ENCODE measurements at regions of chr6 and their contacts with region 1.

Region 1: DNA sequence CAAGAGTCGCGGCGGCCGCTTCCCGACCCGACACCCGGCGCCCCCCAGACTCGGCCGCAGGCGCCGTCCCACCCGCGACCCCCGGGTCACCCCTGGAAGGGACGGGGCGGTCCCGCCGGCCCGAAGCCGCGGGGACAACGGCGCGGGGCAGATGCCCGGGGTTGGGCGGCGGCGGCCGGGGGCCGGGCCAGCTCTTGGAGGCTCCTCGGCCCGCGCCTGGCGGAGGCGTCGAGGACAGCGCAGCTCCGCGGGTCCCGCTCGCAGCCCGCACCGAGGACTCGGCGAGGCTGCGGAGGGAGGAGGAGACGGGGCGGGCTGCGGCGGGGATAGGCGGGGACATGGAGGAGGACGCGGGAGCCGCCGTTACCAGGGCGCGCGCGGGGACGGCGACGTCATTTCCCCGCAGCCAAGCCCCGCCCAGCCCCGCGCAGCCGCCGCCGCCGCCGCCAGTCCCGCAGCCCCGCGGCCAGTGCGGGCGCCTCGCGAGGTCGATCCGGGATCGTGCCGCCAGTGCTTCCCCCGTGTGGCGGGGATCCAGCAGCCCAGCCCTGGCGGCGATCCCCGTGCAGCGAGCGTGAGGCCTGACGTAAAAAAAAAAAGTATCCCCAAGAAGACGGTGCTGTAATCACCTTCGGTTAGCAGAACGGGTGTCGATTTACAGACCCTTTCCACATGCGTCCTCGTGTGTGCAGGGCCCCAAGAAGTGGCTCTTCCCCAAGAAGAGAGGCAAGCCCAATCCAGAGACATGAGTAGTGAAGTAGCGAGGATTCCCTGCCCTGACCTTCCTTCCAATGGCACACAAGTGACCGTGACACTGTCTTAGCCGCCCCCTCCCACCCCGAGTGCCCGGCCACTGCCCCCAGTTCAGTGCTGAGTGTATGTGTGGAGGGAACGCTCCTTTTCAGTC is at the start of gene FAM184A:
- DNase-seq: peak; percentile 94
- H3K4me3 Mint-ChIP-seq: peak within 1 kb of the TSS; percentile 93
- H3K27ac Mint-ChIP-seq: peak within 1 kb of the TSS; percentile 93
- H3K4me1 Mint-ChIP-seq: peaks cover 37% of the 10 kb centered on the region
- H3K27me3 Mint-ChIP-seq: peaks cover 6% of the 10 kb centered on the region
- total RNA-seq, gene FAM184A: 7.5 and 9.0 TPM in 2 replicates

Region 2: DNA sequence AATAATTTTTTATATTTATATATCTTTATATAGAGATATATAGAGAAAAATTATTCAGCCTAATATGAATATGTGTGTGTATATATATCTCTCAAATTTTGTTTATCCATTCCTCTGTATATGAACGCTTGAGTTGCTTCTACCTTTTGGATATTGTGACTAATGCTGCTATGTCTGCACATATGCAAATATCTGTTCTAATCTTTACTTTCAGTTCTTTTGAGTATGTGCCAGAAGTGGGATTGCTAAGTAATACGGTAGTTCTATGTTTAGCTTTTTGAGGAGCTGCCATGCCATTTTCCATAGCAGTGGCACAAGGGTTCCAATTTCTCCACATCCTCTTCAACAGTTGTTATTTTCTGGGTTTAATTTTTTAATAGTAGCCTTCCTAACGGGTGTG is 354.4 kb before region 1 on chr6:
- intact Hi-C with region 1: loop called (anchors 10 kb)
- DNase-seq: no peak
- H3K4me3 Mint-ChIP-seq: peak overlapping the region; percentile 36
- H3K27ac Mint-ChIP-seq: peak overlapping the region; percentile 59
- H3K4me1 Mint-ChIP-seq: peaks cover 51% of the 10 kb centered on the region
- H3K27me3 Mint-ChIP-seq: no peaks in the 10 kb centered on the region

Region 3: GRCh38 chr6:118934461-118935330 is 143.9 kb before region 1 on chr6 and contains the start of gene MCM9:
- intact Hi-C with region 1: loop called (anchors 1 kb)
- DNase-seq: peak; percentile 97
- H3K4me3 Mint-ChIP-seq: peak within 1 kb of the TSS; percentile 91
- H3K27ac Mint-ChIP-seq: peak within 1 kb of the TSS; percentile 97
- H3K4me1 Mint-ChIP-seq: peaks cover 19% of the 10 kb centered on the region
- H3K27me3 Mint-ChIP-seq: no peaks in the 10 kb centered on the region
- total RNA-seq, gene MCM9: 19.0 and 21.3 TPM in 2 replicates

Region 4: GRCh38 chr6:119052292-119052889 is 26.2 kb before region 1 on chr6:
- intact Hi-C with region 1: loop called (anchors 1 kb)
- DNase-seq: peak; percentile 70
- H3K4me3 Mint-ChIP-seq: no peak overlapping the region
- H3K27ac Mint-ChIP-seq: peak overlapping the region; percentile 5
- H3K4me1 Mint-ChIP-seq: peaks cover 18% of the 10 kb centered on the region
- H3K27me3 Mint-ChIP-seq: no peaks in the 10 kb centered on the region

Region 5: GRCh38 chr6:119066517-119066916 is 12.1 kb before region 1 on chr6:
- intact Hi-C with region 1: no loop called
- DNase-seq: no peak
- H3K4me3 Mint-ChIP-seq: no peak overlapping the region
- H3K27ac Mint-ChIP-seq: no peak overlapping the region
- H3K4me1 Mint-ChIP-seq: no peaks in the 10 kb centered on the region
- H3K27me3 Mint-ChIP-seq: no peaks in the 10 kb centered on the region

Measured in activated CD4-positive, alpha-beta T cell treated with anti-CD3 and anti-CD28 coated beads, Interleukin-2, amount 10 ng/mL, durations not matched to agents 24 days and 14 days (primary cell).